CD8-positive, alpha-beta T cell (primary cell): ENCODE measurements at regions of chr10 and their contacts with region 1.

Region 1: DNA sequence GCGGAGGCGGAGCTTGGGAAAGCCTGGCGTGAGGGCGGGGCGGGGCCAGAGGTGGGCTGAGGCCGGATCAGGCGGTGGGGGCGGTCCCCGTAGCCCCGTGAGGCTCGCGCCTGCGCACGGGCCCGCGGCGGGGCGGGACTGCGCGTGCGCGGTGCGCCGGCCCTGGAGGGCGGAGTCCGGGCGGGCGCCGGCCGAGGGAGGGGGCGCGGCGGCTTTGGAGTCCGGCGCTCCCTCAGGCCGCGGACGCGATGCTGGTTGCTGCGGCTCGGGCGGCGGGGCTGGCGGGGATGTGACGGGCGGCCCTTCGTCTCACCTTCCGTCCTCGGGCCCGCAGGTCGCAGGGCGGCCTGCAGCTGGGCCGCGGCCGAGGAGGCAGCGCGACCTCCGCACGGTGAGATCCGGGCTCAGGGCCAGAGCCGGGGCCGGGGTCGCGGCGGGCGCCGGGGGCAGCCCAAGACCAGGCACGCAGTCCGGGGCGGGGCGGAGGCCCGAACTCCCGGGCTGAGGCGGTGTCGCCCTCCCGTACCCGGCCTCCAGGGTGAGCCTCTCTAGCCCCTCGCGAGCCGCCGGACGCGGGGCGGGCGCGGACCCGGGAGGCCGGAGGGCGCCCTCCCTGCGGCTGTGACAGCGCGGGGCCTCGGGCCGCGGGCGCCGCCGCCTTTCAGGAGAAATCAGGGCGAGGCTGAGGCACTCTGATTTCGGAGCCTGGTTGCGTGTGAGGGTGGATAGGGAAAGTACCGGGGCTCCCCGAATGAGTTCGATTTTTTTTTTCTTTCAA is at the start of gene CCSER2:
- DNase-seq: peak; percentile 81 to 95 (median 90)
- ATAC-seq: peak; percentile 54
- H3K4me3 ChIP-seq: peak within 1 kb of the TSS; percentile 52 to 65
- H3K4me3 Mint-ChIP-seq: peak within 1 kb of the TSS; percentile 93
- H3K27ac ChIP-seq: peak within 1 kb of the TSS; percentile 87 to 88
- H3K27ac Mint-ChIP-seq: peak within 1 kb of the TSS; percentile 99
- H3K4me1 ChIP-seq: peaks cover 33% of the 10 kb centered on the region
- H3K4me1 Mint-ChIP-seq: peaks cover 40% of the 10 kb centered on the region
- H3K27me3 ChIP-seq: no peaks in the 10 kb centered on the region
- H3K27me3 Mint-ChIP-seq: no peaks in the 10 kb centered on the region
- CTCF ChIP-seq: no peak
- total RNA-seq, gene CCSER2: 141 to 143 TPM

Region 2: DNA sequence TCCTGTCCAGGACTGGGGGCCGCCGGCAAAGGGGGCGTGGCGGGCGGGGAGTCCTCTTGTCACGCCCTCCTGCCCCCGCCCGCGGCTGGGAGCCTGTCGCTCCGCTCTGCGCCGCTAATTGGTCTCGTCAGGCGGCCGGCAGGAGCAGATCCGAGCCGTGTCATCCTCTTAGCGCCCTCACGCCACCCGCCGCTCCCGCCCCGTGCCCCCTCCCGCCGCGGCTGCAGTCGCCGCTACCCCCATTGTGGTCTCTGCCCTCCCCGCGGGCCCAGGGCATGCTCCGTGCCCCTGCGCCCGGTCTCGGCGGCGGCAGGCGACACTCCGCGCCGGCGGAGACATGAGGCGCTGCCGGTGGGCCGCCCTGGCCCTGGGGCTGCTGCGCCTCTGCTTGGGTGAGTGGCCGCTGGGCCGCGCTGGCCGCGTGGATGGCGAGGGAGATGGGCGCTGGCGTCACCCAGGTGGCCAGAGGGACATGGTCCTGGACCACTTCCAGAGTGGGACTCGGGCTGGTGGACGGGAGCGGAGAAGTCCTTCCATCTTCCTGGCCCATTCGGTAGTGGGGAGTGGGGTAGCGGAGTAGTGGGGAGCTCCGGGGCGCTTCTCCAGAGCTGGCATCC is 134.1 kb before region 1 on chr10 and contains the start of gene CDHR1:
- CTCF ChIA-PET with region 1: no interaction called
- POLR2A ChIA-PET with region 1: no interaction called
- intact Hi-C with region 1: loop called in 1 of 2 experiments (anchors 5 kb)
- DNase-seq: peak; percentile 12 to 79 (median 52)
- ATAC-seq: peak; percentile 70
- H3K4me3 ChIP-seq: peak within 1 kb of the TSS; percentile 49 to 56
- H3K4me3 Mint-ChIP-seq: peak within 1 kb of the TSS; percentile 77
- H3K27ac ChIP-seq: no peak within 1 kb of the TSS
- H3K27ac Mint-ChIP-seq: no peak within 1 kb of the TSS
- H3K4me1 ChIP-seq: peaks cover 26% of the 10 kb centered on the region
- H3K4me1 Mint-ChIP-seq: peaks cover 27% of the 10 kb centered on the region
- H3K27me3 ChIP-seq: peaks cover 0 to 6% of the 10 kb centered on the region in 2 experiments
- H3K27me3 Mint-ChIP-seq: peaks cover 9% of the 10 kb centered on the region
- CTCF ChIP-seq: no peak
- total RNA-seq, gene CDHR1: 1.5 to 1.7 TPM

Region 3: GRCh38 chr10:84264611-84265141 is 63.9 kb before region 1 on chr10:
- CTCF ChIA-PET with region 1: no interaction called
- POLR2A ChIA-PET with region 1: interaction called, 3 read pairs
- intact Hi-C with region 1: loop called in 1 of 2 experiments (anchors 5 kb)
- DNase-seq: peak; percentile 53 to 82 (median 75)
- ATAC-seq: peak; percentile 97
- H3K4me3 ChIP-seq: no peak overlapping the region
- H3K4me3 Mint-ChIP-seq: no peak overlapping the region
- H3K27ac ChIP-seq: no peak overlapping the region
- H3K27ac Mint-ChIP-seq: no peak overlapping the region
- H3K4me1 ChIP-seq: no peaks in the 10 kb centered on the region
- H3K4me1 Mint-ChIP-seq: peaks cover 11% of the 10 kb centered on the region
- H3K27me3 ChIP-seq: no peaks in the 10 kb centered on the region
- H3K27me3 Mint-ChIP-seq: peaks cover 23% of the 10 kb centered on the region
- CTCF ChIP-seq: peak; percentile 98